HEK293T (cell line): ENCODE measurements at regions of chr1 and their contacts with region 1.

Region 1: DNA sequence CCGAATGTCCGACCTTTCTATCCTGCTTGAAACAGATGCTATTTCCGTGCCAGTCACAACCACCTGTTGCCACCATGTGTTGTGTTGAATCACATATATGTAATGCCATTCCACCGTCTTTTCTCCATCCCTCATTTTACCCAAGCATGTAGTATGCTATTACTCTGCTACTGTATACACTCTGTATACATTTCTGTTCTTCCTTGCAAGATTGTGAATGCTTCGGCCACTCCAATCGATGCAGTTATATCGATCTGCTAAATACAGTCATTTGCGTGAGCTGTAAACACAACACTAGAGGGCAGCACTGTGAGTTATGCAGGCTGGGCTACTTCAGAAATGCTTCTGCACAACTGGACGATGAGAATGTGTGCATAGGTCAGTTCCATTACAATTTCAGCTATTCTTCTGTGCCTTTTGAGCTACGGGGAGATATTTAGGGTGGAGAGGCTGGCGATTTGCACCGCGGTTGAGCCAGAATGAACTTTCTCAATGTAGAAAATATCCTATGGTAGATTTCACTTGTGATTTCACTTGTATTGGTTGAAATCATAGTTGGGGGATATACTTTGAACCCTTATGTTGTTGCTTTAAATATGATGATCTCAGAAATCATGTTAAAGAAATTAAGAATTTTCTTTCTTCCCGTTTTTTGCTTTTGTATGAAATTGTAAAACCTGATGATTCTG is 289.8 kb downstream of the NTNG1 start:
- DNase-seq: peak; percentile 69

Region 2: DNA sequence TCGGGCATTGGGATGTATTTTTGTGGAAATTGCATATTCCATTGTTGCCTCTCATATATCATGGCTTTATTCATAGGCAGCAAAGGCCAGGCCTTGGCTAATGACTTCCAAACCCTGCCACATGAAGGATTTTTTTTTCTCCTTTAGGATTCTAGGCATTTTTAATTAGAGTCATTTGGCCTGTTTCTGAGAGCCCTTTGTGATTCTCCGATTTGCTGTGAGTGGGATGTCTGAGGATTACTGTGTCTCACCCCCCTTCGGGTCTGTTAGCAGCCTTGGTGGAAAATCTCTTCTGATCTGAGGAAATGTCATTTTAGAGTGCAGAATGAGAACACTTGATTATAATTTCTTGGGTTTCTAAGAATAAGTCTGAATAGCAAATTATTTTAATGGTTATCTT is 36.4 kb before region 1 on chr1:
- CTCF ChIA-PET with region 1: no interaction called
- POLR2A ChIA-PET with region 1: no interaction called
- DNase-seq: no peak

Region 3: DNA sequence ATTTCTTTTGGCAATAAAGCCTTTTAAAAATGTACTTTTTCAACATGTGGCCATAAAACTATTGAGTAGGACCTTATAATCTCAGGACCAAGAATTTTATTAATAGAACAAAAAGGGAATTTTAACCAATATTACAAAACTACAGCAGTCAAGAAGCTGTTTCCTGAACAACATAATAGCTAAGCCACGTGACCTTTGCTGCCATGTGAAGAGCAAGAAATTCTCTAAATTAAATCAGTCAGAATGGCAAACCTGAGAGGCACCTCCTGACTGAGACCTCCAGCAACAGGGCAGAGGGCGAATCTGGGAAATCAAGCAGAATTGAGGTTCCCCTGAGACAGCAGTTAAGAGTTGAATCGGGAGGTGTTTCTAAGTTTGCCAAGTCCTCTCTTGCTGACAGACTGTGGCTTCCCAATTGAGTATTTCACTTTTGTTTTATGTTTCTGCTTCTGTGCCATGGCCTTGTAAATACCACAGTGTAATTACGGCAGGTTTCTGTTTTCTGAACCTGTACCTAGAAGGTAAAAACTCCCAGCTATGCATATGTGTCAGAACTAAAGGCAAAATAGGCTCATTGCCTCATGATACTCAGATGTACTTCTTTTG is 68.6 kb after region 1 on chr1:
- CTCF ChIA-PET with region 1: no interaction called
- POLR2A ChIA-PET with region 1: no interaction called
- DNase-seq: no peak

Region 4: GRCh38 chr1:107529502-107530149 is 98.9 kb after region 1 on chr1:
- CTCF ChIA-PET with region 1: interaction called, 12 read pairs
- POLR2A ChIA-PET with region 1: no interaction called
- DNase-seq: peak; percentile 78

Region 5: DNA sequence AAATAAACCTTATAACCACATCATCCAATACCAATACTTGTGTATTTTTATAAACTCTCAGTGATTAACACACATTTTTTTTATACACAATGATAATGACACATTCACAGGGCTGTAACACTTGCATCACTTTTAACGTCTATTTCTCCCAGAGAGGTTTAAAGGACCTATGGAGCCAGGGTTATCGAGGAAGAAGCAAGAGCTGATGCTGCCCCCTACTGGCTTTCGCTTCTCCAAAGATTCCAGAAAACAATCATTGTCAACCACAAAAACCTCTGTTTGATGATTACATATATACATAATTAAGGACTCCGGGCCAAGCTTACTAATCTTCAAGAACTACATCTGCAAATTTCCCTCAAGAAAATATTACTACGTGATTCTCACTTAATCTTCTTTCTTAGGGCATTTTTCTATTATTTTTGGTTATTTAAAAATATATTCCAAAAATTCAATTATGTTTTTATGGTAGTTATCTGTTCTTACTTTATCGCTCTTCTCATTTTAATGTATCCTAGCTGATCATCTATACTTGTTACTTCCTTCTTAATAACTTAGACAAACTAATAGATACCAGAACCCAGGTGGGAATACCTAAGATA is 319.8 kb after region 1 on chr1:
- CTCF ChIA-PET with region 1: interaction called, 30 read pairs
- POLR2A ChIA-PET with region 1: no interaction called
- DNase-seq: peak; percentile 66

Region 6: DNA sequence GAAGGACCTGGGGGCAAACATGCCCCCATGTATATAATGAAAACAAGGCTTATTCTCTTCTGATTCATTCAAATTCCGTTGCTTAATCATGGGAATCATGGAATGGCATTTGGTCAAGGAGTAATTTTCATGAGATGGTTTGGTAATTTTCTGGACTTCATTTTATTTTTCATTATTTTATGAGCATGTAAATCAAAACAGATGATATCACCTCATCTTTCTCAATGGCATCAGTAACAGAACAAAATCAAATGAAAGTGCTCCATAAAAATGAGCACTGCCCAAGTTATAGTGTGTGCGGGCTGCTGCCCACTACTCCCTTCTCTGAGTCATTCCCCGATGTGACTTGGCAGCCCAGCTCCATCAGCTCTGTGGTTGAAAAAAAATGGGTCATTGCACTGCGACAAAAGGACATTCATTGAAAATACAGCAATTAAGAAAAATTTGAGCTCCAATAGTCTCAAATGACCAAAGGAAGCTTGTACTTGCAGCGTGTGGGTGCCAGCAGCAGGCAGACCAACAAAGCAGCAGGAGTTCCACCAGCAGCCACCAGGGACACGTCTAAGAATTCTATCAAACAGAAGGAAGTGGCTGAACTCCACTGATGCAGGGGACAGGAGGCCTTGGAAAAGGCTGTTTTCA is 618.6 kb after region 1 on chr1:
- CTCF ChIA-PET with region 1: no interaction called
- POLR2A ChIA-PET with region 1: no interaction called
- DNase-seq: peak; percentile 72